Prostate gland (tissue), 2 donors: ENCODE measurements at regions of chr1 and their contacts with region 1.

Region 1: DNA sequence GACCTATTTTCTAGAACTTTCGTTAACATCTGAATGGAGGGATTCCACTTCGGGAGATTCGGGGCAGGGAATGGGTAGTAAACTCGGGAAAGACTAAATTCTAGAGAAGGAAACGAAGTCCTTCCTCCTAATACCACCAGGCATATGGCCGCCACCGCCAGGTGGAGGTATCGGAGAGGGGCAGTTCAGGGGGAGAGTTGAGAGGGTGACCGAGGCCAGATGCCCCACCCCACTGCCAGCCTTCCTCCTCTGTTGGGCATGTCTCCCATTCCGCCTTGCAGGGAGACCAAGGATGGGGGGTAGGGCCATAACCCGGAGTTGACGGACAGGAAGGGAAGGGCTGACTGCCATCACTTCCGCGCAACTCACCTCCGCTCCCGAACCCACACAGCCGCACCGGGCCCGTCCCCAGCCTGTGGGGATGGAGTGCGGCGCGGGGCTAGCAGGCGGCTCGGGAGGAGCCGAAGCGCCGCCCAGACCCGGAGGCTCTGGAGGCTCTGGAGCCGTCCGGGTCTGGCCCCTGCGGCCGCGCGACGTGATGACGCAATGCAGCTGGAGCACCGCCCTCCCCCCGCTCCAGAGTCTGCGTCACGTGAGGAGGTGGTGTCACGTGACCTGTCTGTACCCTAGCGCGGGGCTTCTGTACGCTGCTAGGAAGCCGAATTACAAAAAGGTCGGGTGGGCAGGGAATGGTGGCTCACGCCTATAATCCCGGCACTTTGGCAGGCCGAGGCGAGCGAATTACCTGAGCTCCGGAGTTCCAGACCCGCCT is at the start of gene KLHL12:
- DNase-seq: peak; percentile 96
- H3K4me3 ChIP-seq: peak within 1 kb of the TSS; percentile 52 to 93
- H3K27ac ChIP-seq: peak within 1 kb of the TSS; percentile 91 to 97
- H3K4me1 ChIP-seq: no peaks in the 10 kb centered on the region
- H3K27me3 ChIP-seq: no peaks in the 10 kb centered on the region
- CTCF ChIP-seq: peak; percentile 25 to 75 (median 57)
- POLR2A ChIP-seq: peak; percentile 87
- total RNA-seq, gene KLHL12: 33.9 to 56.6 TPM

Region 2: GRCh38 chr1:202821452-202821851 is 105.5 kb before region 1 on chr1:
- intact Hi-C with region 1: no loop called
- DNase-seq: no peak
- H3K4me3 ChIP-seq: no peak overlapping the region
- H3K27ac ChIP-seq: no peak overlapping the region
- H3K4me1 ChIP-seq: no peaks in the 10 kb centered on the region
- H3K27me3 ChIP-seq: no peaks in the 10 kb centered on the region
- CTCF ChIP-seq: no peak
- POLR2A ChIP-seq: no peak

Region 3: GRCh38 chr1:203006948-203007871 is 80.3 kb after region 1 on chr1 and contains the start of gene TMEM183A:
- intact Hi-C with region 1: loop called (anchors 5 kb)
- DNase-seq: peak; percentile 96
- H3K4me3 ChIP-seq: peak within 1 kb of the TSS; percentile 91
- H3K27ac ChIP-seq: peak within 1 kb of the TSS; percentile 89 to 94
- H3K4me1 ChIP-seq: peaks cover 4% of the 10 kb centered on the region
- H3K27me3 ChIP-seq: no peaks in the 10 kb centered on the region
- CTCF ChIP-seq: no peak
- POLR2A ChIP-seq: peak; percentile 86
- total RNA-seq, gene TMEM183A: 80.2 to 88.2 TPM